BJ (cell line): ENCODE measurements at regions of chr2 and their contacts with region 1.

Region 1: DNA sequence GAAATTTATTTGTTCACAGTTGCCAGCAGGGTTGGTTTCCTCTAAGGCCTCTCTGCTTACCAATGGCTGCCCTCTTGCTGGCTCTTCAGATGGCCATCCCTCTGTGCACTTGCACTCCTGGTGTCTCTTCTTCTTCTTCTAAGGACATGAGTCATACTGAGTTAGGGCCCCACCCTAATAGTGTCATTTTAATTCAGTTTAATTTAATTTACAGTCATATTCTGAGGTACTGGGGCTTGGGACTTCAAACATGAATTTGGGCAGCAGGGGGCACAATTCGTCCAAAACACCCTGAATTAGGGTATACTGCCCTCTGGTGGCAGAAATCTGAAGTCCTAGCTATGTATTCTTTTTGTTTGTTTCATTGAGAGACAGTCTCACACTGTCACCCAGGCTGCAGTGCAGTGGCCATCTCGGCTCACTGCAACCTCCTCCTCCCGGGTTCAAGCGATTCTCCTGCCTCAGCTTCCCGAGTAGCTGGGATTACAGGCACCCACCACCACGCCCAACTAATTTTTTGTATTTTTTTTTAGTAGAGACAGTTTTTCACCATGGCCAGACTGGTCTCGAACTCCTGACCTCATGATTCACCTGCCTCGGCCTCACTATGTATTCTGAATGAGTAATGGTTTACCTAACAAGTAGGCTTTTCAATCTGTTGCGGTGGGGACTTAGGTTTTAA is 19.8 kb downstream of the SLC4A1AP start:
- DNase-seq: peak; percentile 54
- H3K4me3 ChIP-seq: no peak overlapping the region
- H3K27me3 ChIP-seq: no peaks in the 10 kb centered on the region; the same call in 1 of the 2 replicates
- CTCF ChIP-seq: peak; percentile 83

Region 2: DNA sequence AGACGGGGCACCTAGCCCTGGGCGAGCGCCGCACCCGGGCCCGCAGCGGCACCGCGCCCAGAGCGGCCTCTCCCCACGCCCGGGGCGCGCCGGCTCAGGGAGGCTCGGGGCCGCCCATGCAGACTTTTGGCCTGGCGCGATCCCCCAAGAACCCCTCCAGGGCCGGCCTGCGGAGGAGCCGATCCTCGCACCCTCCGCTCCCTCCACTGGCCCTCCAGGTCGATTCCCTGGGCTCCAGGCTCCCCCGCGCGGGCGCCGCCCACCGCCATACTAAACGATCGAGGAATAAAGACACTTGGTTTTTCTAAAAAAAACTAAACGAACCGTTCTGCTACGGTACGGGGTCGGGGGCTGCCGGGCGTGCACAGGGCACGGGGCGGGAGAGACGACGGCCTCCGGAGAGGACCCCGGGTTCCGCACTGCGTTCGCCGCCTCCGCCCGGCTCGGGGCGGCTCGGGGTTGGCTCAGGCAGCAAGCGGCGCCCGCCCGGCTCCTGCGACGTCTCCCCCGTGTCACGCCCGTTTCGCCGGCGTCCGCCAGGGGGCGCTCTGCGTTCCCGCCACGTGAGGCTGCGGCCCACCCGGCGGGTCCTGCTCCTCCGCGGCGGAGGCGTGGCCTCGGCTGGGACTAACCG is 597.3 kb before region 1 on chr2:
- CTCF ChIA-PET with region 1: no interaction called
- POLR2A ChIA-PET with region 1: no interaction called
- DNase-seq: peak; percentile 49
- H3K4me3 ChIP-seq: peak overlapping the region; percentile 49
- H3K27me3 ChIP-seq: no peaks in the 10 kb centered on the region
- CTCF ChIP-seq: peak; percentile 51

Region 3: GRCh38 chr2:27509326-27509725 is 174.2 kb before region 1 on chr2:
- CTCF ChIA-PET with region 1: no interaction called
- POLR2A ChIA-PET with region 1: no interaction called
- DNase-seq: no peak
- H3K4me3 ChIP-seq: no peak overlapping the region
- H3K27me3 ChIP-seq: no peaks in the 10 kb centered on the region
- CTCF ChIP-seq: no peak

Region 4: GRCh38 chr2:27647289-27647688 is 36.2 kb before region 1 on chr2:
- CTCF ChIA-PET with region 1: interaction called, 10 read pairs
- POLR2A ChIA-PET with region 1: interaction called, 7 read pairs
- DNase-seq: no peak
- H3K4me3 ChIP-seq: no peak overlapping the region
- H3K27me3 ChIP-seq: no peaks in the 10 kb centered on the region
- CTCF ChIP-seq: no peak

Region 5: DNA sequence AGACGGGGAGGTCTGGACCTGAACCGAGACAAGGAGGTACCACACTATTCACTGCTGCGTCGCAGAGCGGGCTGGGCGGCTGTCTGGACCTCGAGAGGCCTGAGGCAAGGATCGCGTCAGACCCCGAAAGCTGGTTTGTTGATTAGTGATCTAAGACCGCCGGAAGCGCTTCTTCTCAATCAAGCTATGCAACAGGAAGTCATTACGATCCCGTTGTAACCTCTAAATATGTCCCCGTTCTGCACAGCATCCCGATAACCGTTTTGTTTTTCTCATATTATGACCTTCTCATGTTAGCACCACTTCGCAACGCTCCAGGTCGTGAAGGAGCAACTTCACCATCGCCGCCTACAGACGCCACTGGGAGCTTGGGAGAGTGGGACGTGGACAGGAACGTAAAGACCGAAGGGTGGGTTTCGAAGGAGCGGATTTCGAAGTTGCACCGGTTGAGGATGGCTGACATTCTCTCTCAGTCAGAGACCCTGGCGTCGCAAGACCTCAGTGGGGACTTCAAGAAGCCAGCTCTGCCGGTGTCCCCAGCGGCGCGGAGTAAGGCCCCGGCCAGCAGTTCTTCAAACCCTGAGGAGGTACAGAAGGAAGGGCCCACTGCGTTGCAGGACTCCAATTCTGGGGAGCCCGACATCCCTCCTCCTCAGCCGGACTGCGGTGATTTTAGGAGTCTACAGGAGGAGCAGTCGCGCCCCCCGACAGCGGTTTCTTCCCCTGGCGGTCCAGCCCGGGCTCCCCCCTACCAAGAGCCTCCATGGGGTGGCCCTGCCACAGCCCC is 19.9 kb before region 1 on chr2 and contains the starts of genes SLC4A1AP and SUPT7L:
- CTCF ChIA-PET with region 1: interaction called, 13 read pairs
- POLR2A ChIA-PET with region 1: interaction called, 3 read pairs
- DNase-seq: peak; percentile 44
- H3K4me3 ChIP-seq: peak within 1 kb of the TSS; percentile 75
- H3K27me3 ChIP-seq: no peaks in the 10 kb centered on the region
- CTCF ChIP-seq: no peak; the same call in 1 of the 2 replicates
- polyA plus RNA-seq, gene SLC4A1AP: 8.8 and 10.1 TPM in 2 replicates
- polyA plus RNA-seq, gene SUPT7L: 43.5 and 52.0 TPM in 2 replicates

Region 6: GRCh38 chr2:27697660-27698059 is 14.1 kb after region 1 on chr2:
- CTCF ChIA-PET with region 1: interaction called, 16 read pairs
- POLR2A ChIA-PET with region 1: no interaction called
- DNase-seq: no peak
- H3K4me3 ChIP-seq: no peak overlapping the region
- H3K27me3 ChIP-seq: no peaks in the 10 kb centered on the region
- CTCF ChIP-seq: no peak

Region 7: DNA sequence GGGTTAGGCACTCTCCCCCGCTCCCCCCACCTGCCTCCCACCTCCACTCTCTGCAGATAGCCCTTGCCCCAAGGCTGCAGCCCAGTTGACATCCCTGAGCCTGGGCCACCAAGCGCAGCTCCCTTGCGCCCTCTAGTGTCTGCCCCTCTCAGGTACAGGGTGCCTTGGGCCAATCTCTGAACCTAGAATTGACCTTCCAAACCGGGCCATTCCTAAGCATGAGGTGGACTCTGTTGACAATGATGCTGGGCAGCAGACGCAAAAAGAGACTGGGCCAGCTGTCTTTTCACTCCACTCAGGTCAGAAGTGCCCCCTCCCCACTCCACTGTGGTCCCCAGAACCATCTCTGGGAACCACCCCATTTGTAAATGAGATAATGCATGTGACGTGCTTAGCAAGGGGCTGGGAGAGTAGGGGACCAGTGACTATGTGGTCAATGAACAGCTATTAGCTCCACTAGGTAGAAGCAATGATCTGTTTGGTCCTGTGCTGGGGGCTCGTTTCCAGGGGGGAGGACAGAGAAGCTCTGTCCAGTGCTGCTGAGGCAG is 769.1 kb after region 1 on chr2:
- CTCF ChIA-PET with region 1: interaction called, 12 read pairs
- POLR2A ChIA-PET with region 1: no interaction called
- DNase-seq: no peak
- H3K4me3 ChIP-seq: no peak overlapping the region
- H3K27me3 ChIP-seq: no peaks in the 10 kb centered on the region
- CTCF ChIP-seq: peak; percentile 97